Mammary epithelial cell (primary cell): ENCODE measurements at regions of chr1 and their contacts with region 1.

Region 1: GRCh38 chr1:9428601-9429341 is 110.5 kb upstream of the SLC25A33 start:
- DNase-seq: peak; percentile 99
- H3K4me3 ChIP-seq: peak overlapping the region; percentile 50 to 61 (median 59)
- H3K27ac ChIP-seq: peak overlapping the region; percentile 94
- H3K4me1 ChIP-seq: peaks cover 9% of the 10 kb centered on the region
- H3K27me3 ChIP-seq: no peaks in the 10 kb centered on the region
- CTCF ChIP-seq: peak in 1 of 2 donors; percentile 41

Region 2: GRCh38 chr1:9028921-9029705 is 399.7 kb before region 1 on chr1:
- CTCF ChIA-PET with region 1: no interaction called
- dilution Hi-C with region 1: no loop called
- in situ Hi-C with region 1: no loop called
- intact Hi-C with region 1: no loop called
- DNase-seq: no peak
- H3K4me3 ChIP-seq: no peak overlapping the region
- H3K27ac ChIP-seq: no peak overlapping the region
- H3K4me1 ChIP-seq: no peaks in the 10 kb centered on the region
- H3K27me3 ChIP-seq: no peaks in the 10 kb centered on the region
- CTCF ChIP-seq: no peak

Region 3: DNA sequence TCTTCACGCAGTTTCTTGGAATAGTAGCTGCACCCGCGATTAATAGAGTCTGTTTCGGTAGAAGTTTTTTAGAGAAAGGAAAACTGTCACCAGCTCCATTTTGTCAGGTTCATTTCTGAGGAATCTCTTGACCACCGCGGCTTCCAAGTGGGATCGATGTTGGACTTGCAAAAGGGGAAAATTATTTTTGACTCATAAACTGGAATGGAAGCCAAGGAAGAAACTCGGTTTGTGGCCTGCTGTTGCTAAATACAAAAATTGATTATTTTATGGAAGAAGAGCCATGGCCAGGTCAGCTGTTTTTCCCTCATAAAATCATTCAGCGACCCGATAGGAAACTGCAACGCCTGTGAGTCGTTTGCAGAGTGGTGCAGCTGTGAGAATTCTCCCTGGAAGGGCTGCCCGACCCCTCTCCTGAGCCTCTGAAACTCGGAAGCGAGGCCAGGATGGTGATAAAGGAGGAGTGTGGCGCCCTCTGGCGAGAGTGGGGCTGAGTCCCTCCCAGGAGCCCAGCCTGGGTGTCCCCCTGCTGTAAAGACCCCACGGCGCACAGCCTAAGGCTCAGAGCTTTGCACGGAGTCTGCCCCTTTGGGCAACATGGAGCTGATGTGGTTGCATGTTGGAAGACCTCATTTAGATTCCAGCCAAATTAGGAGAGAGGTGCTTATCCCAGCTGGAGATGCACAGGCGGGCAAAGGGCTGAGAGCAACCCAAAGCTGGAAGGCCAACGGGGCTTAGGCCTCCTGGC is 26.9 kb after region 1 on chr1:
- CTCF ChIA-PET with region 1: no interaction called
- dilution Hi-C with region 1: no loop called
- in situ Hi-C with region 1: no loop called
- intact Hi-C with region 1: loop called (anchors 1 kb)
- DNase-seq: peak; percentile 24
- H3K4me3 ChIP-seq: no peak overlapping the region
- H3K27ac ChIP-seq: no peak overlapping the region
- H3K4me1 ChIP-seq: peaks cover 4% of the 10 kb centered on the region
- H3K27me3 ChIP-seq: no peaks in the 10 kb centered on the region
- CTCF ChIP-seq: peak; percentile 61 to 91

Region 4: GRCh38 chr1:9473032-9473792 is 44.4 kb after region 1 on chr1:
- CTCF ChIA-PET with region 1: no interaction called
- dilution Hi-C with region 1: no loop called
- in situ Hi-C with region 1: no loop called
- intact Hi-C with region 1: loop called (anchors 2 kb)
- DNase-seq: peak; percentile 93
- H3K4me3 ChIP-seq: no peak overlapping the region
- H3K27ac ChIP-seq: no peak overlapping the region
- H3K4me1 ChIP-seq: peaks cover 29% of the 10 kb centered on the region
- H3K27me3 ChIP-seq: no peaks in the 10 kb centered on the region
- CTCF ChIP-seq: no peak